ENCODE measurements at regions of chr12 and their contacts with region 1.

Region 1: DNA sequence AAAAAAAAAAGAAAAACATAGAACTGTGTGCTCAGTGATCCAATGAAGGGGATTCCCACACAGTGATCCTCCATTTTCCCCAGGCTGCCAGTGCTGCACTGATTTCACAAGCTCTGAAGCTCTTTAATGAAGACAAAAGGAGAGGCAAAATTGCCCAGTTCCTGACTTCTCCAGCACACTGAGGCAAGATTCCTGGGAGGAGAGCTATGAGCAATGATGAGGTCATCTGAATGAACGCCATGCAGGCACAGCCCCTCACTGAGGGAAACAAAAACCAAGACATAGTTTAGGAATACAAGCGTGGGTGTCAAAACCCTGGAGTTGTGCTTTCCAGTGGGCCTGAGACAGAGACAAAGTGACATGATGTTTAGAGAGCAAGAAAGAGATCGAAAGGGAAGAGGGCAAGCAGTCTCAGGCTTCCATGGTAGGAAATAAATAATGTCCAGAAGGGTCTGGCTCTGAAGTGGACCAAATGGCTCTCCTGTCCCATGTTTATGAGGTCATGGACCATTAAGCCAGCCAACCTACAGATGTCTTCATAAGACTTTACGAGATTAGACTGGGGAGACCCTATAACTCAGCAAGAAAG is 40.9 kb upstream of the SMUG1 start:
- DNase-seq: no peak
- H3K4me3 ChIP-seq: no peak overlapping the region
- H3K27ac ChIP-seq: no peak overlapping the region
- H3K4me1 ChIP-seq: peaks cover 6 to 29% (median 18%) of the 10 kb centered on the region in 4 experiments
- H3K27me3 ChIP-seq: peaks cover 0 to 2% (median 0%) of the 10 kb centered on the region in 5 experiments

Region 2: DNA sequence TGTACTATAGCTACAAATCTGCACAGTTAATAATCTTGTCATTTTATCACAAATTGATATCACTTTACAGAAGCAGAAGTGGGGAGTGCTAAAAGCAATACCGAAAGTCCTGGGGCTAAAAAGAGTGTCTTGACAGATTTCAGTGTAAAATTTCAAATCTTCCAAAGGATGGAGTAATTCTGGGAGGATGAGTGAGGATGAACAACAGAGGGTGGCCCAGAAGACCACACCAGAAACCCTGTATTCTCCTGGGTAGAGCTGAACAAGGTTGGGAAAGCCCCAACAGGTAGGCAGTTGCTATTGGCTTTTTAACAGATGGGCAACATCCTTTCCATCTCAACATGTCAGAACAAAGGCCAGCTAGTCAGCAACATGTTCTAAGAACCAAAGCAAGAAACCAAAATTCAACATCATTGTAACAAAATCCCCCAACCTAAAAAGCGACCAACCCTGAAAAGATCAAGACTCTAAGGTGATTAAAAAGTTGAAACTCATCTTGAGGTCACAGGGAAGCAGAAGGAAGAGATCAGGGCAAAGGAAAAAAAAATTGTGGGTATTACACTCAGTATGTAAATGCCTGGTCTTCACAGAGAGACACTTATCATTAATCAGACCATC is 11.4 kb after region 1 on chr12:
- CTCF ChIA-PET with region 1: interaction called, 26 read pairs
- POLR2A ChIA-PET with region 1: interaction called, 4 read pairs
- DNase-seq: no peak
- H3K4me3 ChIP-seq: no peak overlapping the region
- H3K27ac ChIP-seq: no peak overlapping the region
- H3K4me1 ChIP-seq: no peaks in the 10 kb centered on the region
- H3K27me3 ChIP-seq: no peaks in the 10 kb centered on the region

Measured in common myeloid progenitor, CD34-positive (primary cell).